Thyroid gland (tissue), 4 donors: ENCODE measurements at regions of chr20 and their contacts with region 1.

Region 1: DNA sequence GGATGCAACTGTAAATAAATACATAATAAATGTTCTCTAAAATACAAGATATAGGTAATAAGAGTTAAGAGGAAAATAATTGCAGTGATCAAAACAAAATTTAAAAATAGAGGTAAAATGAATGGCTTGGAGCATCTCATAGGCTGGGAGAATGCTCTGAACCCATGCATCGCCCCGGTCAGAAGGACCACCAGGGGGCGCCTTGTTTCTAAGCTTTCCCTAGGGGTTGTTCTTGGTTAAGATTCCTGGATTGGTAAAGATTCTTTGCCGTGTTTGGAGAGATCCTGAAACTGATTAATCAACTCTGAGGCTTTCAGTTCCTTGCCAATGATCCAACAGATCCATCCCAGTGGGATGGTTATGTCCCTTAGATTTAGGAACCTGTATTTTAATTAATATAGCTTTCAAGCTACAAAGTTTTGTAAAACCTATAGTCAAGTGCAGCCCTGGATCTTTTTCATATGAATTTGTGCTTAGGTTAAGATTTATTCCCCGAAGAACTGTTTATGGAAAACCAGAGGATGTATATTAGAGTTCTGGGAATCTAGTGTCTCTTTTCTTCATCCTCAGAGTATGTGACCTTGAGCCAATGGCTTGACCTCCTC is 45.3 kb upstream of the PRELID3B start:
- DNase-seq: peak; percentile 86 to 88
- H3K4me3 ChIP-seq: no peak overlapping the region
- H3K27ac ChIP-seq: no peak overlapping the region
- H3K4me1 ChIP-seq: peaks cover 17 to 18% of the 10 kb centered on the region in 2 donors
- H3K27me3 ChIP-seq: no peaks in the 10 kb centered on the region
- CTCF ChIP-seq: peak; percentile 78 to 87 (median 83)
- POLR2A ChIP-seq: no peak

Region 2: DNA sequence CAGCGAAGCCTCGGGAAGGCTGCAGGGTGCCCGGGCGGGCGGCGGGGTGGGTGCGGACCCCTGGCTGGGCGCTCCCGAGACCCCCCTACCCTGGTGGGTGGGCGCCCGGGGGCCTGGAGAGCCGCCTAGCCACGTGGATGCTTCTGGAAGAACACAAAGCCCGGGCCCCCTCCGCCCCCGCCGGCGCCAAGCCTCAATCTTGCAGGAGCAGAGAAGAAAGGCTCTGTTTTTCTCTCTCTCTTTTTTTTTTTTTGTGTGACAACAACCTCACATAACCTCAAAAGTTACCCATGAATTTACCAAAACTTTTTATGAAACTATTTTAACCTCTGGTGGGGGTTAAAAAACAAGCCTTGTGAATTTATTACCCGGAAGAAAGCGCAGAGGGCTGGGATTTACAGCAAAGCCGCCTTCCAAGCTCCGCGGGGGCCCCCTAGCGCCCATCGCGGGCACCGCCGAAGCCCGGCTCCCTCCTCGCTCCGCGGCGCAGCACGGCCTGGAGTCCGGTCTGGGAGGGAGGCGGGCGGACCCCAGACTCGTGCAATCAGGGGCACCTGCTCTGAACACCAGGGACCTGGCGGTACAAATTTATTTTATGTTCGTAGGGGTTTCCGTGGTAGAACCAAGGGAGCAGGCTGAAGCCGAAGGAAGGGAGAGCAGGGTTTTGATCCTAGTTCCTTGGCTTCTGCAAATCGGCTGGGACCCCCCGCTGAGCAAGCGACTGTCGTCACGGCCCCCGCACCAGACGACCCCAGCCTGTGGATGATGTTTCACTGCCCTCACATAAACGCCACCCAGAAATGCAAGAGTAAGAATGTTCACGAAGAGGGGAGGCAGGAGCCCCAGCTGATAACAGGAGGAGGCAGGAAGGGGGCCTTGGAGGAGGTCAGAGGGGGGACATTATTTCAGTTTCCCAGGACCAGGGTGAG is 134.6 kb after region 1 on chr20:
- intact Hi-C with region 1: loop called (anchors 5 kb)
- DNase-seq: peak; percentile 80 to 82
- H3K4me3 ChIP-seq: peak overlapping the region in 1 of 3 donors; percentile 40
- H3K27ac ChIP-seq: peak overlapping the region; percentile 4 to 84 (median 37)
- H3K4me1 ChIP-seq: peaks cover 24 to 26% of the 10 kb centered on the region in 2 donors
- H3K27me3 ChIP-seq: no peaks in the 10 kb centered on the region
- CTCF ChIP-seq: peak; percentile 73 to 96 (median 90)
- POLR2A ChIP-seq: no peak